ENCODE measurements at regions of chr1 and their contacts with region 1.

Region 1: DNA sequence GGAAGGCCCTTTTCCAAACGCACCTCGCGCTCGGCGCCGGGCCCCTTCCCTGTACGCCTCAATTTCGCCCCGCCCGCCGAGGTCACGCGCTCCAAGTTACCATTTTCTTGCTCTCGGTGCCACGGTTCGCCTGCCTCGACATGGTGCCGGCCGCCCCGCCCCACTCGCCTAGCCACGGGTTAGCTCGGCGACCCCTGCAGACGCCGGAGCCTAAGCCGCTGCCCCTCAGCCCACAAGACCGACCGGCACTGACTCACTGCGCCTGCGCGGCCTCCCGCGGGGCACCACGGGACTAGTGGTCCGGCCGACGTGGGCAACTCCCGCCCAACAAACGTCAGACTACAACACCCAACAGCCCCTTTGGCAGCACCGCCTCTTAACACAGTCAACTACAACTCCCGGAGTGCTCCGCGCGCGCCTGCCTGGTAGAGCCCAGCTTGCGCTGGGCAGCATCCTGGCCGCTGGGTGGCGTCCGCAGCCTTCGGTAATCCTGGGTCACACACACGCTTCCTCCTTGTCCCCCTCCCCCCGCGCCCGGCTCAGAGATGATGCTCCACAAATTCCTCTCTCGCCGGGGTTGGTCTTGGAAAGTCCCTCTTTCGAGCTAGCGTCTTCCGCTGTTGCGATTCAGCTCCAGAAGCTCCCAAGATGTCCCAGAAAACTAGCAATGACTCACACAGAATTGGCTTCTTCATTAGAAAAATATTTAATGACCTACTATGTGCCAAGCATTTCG is at the start of gene TRAPPC3:
- DNase-seq: peak; percentile 99
- H3K4me3 Mint-ChIP-seq: peak within 1 kb of the TSS; percentile 92
- H3K27ac Mint-ChIP-seq: peak within 1 kb of the TSS; percentile 94
- H3K4me1 Mint-ChIP-seq: peaks cover 50% of the 10 kb centered on the region
- H3K27me3 Mint-ChIP-seq: no peaks in the 10 kb centered on the region
- total RNA-seq, gene TRAPPC3: 68.4 and 71.5 TPM in 2 replicates

Region 2: GRCh38 chr1:36099681-36100341 is 49.6 kb before region 1 on chr1:
- intact Hi-C with region 1: loop called (anchors 1 kb)
- DNase-seq: peak; percentile 63
- H3K4me3 Mint-ChIP-seq: no peak overlapping the region
- H3K27ac Mint-ChIP-seq: no peak overlapping the region
- H3K4me1 Mint-ChIP-seq: peaks cover 3% of the 10 kb centered on the region
- H3K27me3 Mint-ChIP-seq: no peaks in the 10 kb centered on the region

Region 3: GRCh38 chr1:36187800-36188593 is 38.6 kb after region 1 on chr1:
- intact Hi-C with region 1: loop called (anchors 1 kb)
- DNase-seq: peak; percentile 69
- H3K4me3 Mint-ChIP-seq: no peak overlapping the region
- H3K27ac Mint-ChIP-seq: peak overlapping the region; percentile 70
- H3K4me1 Mint-ChIP-seq: peaks cover 5% of the 10 kb centered on the region
- H3K27me3 Mint-ChIP-seq: no peaks in the 10 kb centered on the region

Region 4: DNA sequence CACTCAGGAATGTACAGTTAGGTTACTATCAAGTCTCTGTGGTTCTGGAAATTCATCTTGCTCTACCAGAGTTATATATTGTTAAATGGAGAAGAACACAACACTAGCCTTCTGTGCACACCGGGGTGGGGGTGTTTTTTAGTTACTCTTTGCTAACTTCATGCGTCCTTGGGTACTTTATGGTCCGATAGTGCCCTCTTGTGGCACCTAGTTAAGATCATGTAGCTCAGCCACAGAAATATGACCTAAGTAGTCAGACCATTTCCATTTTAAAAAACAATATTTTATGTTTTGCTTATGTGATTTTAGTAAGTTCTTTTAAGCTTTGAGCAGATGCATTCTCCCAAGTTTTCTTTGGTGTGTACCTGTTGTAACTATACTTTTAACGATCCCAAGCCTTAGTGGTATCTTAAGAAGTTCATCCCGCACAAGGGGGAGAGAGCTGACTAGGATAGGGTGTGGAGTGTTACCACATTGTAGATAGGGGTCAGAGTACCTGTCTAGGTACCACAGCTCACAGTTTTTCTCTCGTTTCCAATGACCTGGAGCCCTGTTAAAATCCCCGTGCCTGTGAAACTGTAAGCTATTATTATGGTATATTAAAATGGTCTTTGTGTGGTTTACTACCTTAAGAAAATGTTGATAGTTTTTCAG is 136.2 kb after region 1 on chr1:
- intact Hi-C with region 1: loop called (anchors 1 kb)
- DNase-seq: peak; percentile 51
- H3K4me3 Mint-ChIP-seq: no peak overlapping the region
- H3K27ac Mint-ChIP-seq: peak overlapping the region; percentile 73
- H3K4me1 Mint-ChIP-seq: peaks cover 27% of the 10 kb centered on the region
- H3K27me3 Mint-ChIP-seq: no peaks in the 10 kb centered on the region

Region 5: DNA sequence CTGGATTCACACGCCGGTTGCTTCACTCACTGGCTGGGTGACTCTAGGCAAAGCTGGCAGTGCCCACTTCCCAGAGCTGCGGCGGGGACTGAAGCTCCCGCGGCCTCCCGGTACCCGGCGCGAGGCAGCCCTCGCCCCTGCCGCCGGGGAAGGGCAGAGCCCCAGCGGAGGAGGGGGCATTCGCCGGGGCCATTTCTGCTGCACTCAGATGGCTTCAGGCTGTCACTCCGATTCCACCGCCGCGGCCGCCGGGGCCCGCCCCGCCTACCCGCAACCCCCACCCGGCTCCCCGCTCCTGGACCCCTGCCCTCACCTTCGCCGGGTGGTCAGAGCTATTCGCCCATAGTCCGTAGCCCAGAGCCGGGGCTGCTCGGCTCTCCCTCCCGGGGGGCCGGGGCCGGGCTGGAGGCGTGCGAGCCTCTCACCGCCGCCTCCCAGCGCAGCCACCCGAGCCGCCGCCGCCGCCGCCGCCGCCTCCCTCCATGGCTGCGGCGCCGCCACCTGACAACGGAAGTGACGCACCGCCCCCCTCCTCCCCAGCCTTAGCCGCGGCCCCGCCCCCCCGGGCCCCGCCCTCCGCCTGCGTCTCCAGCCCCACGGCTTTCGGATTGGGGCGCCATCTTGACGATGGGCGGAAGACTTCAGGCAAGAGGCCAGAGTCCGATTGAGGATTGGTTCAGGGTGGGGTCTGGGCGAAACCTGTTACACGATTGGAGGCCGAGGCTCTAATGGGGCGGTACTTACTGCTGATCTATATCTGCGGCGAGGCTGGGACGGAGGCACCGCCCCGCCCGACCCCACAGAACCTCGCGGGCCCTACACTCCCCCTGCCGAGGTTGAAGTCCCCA is 236.2 kb after region 1 on chr1 and contains the start of gene STK40:
- intact Hi-C with region 1: loop called (anchors 5 kb)
- DNase-seq: peak; percentile 97
- H3K4me3 Mint-ChIP-seq: peak within 1 kb of the TSS; percentile 91
- H3K27ac Mint-ChIP-seq: peak within 1 kb of the TSS; percentile 94
- H3K4me1 Mint-ChIP-seq: peaks cover 37% of the 10 kb centered on the region
- H3K27me3 Mint-ChIP-seq: no peaks in the 10 kb centered on the region
- total RNA-seq, gene STK40: 41.3 and 42.4 TPM in 2 replicates

Measured in activated T-helper 2 cell treated with anti-CD3 and anti-CD28 coated beads, Interferon-gamma antibody, Interleukin-2, Interleukin-4, amounts not matched to agents 10 μg/mL and 5 μg/mL and 100 μg/mL, durations not matched to agents 14 hours and 24 hours and 36 hours (primary cell).